ENCODE measurements at regions of chr1 and their contacts with region 1.

Region 1: GRCh38 chr1:183915625-183916510 is 110.9 kb downstream of the RGL1 start:
- DNase-seq: peak; percentile 95
- H3K4me3 ChIP-seq: no peak overlapping the region
- H3K27me3 ChIP-seq: no peaks in the 10 kb centered on the region
- CTCF ChIP-seq: peak; percentile 72

Region 2: DNA sequence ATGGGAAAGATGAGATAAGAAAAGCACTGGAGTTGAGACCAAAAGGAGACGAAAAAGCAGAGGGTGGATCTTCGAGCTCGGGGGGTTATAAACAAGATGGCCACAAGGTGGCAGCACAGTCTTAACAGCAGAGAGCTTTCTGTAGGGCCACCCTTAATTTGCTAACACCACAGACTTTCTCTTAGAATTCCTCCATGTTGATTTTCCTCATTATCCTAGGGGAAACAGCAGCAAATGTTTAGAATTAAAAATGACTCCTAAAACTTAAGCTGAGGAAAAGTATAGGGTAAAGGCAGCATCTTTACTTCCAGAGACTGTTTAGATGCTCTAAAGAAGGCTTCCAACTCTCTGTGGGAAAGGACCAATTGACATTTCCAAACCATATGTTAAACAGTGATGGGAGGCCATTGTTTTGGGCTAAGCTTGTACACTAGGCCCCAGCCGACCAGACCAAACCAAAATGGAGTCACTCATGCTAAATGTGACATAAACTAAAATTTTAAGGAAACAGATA is 260.2 kb before region 1 on chr1:
- CTCF ChIA-PET with region 1: interaction called, 106 read pairs
- POLR2A ChIA-PET with region 1: no interaction called
- DNase-seq: no peak
- H3K4me3 ChIP-seq: no peak overlapping the region
- H3K27me3 ChIP-seq: no peaks in the 10 kb centered on the region
- CTCF ChIP-seq: peak; percentile 79

Region 3: GRCh38 chr1:183685112-183685713 is 230.7 kb before region 1 on chr1:
- CTCF ChIA-PET with region 1: interaction called, 20 read pairs
- POLR2A ChIA-PET with region 1: interaction called, 3 read pairs
- DNase-seq: no peak
- H3K4me3 ChIP-seq: no peak overlapping the region
- H3K27me3 ChIP-seq: no peaks in the 10 kb centered on the region
- CTCF ChIP-seq: peak; percentile 72

Region 4: DNA sequence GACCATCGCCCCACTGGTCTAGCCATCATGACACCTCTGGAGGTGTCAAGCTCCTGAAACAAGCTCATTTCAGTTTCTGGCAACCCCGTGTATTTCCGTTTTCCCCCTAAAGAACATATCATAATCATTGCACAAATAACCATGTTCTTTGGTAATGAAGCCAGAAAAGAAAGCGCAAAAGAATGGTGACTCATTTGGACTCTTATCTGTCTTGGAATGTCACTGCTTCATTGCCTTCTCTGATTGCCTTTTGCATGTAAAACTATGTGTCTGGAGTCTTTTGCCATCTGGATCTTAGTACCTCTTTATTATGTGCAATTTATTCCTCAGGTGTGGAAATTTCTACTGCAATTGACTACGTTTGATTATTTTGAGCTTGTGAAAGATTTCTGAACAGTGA is 11.1 kb after region 1 on chr1:
- CTCF ChIA-PET with region 1: interaction called, 12 read pairs
- POLR2A ChIA-PET with region 1: no interaction called
- DNase-seq: no peak
- H3K4me3 ChIP-seq: no peak overlapping the region
- H3K27me3 ChIP-seq: no peaks in the 10 kb centered on the region
- CTCF ChIP-seq: no peak

Region 5: DNA sequence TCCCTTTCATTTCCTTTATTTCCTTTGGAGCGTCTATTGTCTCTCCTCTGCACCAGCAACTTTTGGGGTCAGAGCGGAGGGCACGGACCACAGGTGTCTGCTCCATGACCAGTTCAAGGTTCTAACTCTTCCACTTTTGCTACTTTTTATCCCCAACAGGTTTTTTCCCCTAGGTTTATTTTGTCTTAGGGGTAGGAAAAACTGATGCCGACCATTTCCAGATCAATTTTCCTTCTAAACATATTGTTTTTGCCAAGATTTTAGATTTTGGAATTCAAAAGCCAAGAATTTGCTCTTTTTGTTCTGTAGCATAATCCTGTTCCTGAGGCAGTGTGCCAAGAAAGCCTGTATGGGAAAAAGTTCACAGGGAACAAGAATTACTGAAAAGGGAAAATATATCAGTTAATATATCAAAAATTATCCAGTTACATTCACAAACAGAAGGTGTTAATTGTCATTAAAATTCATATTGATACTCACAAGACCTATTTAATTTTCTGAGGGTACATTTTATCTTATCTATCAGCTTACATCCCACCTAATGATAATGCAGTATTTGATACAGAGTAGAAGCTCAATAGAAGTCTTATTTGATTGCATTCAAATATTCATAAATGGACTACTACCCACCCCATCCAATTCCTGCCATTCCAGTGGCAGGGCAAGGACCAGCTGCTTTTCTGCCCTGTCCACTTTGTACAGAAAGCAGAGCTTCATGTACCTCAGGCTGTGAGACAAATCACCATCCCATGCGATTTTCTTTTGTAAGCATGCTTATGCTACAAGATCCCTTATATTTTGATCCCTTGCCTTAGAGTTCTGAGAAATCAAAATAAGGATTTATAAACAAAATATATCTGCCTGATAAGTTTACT is 166.9 kb after region 1 on chr1:
- CTCF ChIA-PET with region 1: no interaction called
- POLR2A ChIA-PET with region 1: no interaction called
- DNase-seq: no peak
- H3K4me3 ChIP-seq: no peak overlapping the region
- H3K27me3 ChIP-seq: no peaks in the 10 kb centered on the region
- CTCF ChIP-seq: no peak

Measured in BJ (cell line).